ENCODE measurements at regions of chr3 and their contacts with region 1.

Region 1: GRCh38 chr3:17841190-17841828 is 98.9 kb upstream of the TBC1D5 start:
- DNase-seq: peak; percentile 39
- H3K4me3 ChIP-seq: no peak overlapping the region
- CTCF ChIP-seq: peak; percentile 98

Region 2: GRCh38 chr3:17431004-17431403 is 410.3 kb before region 1 on chr3:
- in situ Hi-C with region 1: loop called (anchors 25 kb)
- DNase-seq: no peak
- H3K4me3 ChIP-seq: no peak overlapping the region
- CTCF ChIP-seq: peak; percentile 20